ENCODE measurements at regions of chr5 and their contacts with region 1.

Region 1: DNA sequence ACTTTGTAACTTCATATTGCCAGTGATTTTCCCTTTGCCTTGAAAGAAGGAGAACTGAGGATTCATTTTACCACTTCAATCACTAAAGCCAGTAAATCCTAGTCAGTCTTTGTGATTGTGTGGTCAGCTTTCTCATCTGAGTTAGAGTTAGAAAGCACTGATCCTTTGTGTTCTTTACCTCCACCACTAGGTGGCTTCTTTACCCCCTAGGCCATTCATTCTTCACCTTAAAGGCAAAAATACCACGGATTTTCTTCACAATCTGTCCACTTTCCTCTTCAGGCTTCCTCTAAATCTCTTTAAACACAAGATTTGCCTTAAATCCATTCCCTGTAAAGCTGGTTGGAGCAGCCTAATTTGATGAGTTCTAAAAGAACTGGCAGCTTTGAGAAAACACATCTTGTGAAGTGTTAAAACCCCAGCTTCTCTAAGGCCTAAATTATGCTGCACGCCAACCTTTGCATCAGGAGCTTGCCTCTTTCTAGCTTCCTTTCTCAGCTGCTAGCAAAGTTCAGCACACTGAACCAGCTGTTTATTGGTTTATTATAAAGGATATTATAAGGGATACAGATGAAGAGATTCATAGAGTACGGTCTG is 20.4 kb downstream of the BDP1 start:
- DNase-seq: peak in 3 of 5 donors; percentile 9 to 16 (median 16)
- H3K4me3 ChIP-seq: no peak overlapping the region
- H3K4me3 Mint-ChIP-seq: no peak overlapping the region
- H3K27ac ChIP-seq: no peak overlapping the region
- H3K27ac Mint-ChIP-seq: peak overlapping the region in 3 of 7 donors; percentile 12 to 53 (median 17)
- H3K4me1 ChIP-seq: no peaks in the 10 kb centered on the region
- H3K4me1 Mint-ChIP-seq: peaks cover 0 to 6% (median 3%) of the 10 kb centered on the region in 4 donors
- H3K27me3 ChIP-seq: no peaks in the 10 kb centered on the region
- H3K27me3 Mint-ChIP-seq: no peaks in the 10 kb centered on the region

Region 2: GRCh38 chr5:71461360-71461759 is 14.5 kb before region 1 on chr5:
- CTCF ChIA-PET with region 1: interaction called, 11 read pairs
- POLR2A ChIA-PET with region 1: interaction called, 7 read pairs
- intact Hi-C with region 1: no loop called
- DNase-seq: no peak
- H3K4me3 ChIP-seq: no peak overlapping the region
- H3K4me3 Mint-ChIP-seq: no peak overlapping the region
- H3K27ac ChIP-seq: no peak overlapping the region
- H3K27ac Mint-ChIP-seq: no peak overlapping the region
- H3K4me1 ChIP-seq: peaks cover 16% of the 10 kb centered on the region
- H3K4me1 Mint-ChIP-seq: peaks cover 12 to 21% (median 19%) of the 10 kb centered on the region in 4 donors
- H3K27me3 ChIP-seq: no peaks in the 10 kb centered on the region
- H3K27me3 Mint-ChIP-seq: no peaks in the 10 kb centered on the region

Region 3: DNA sequence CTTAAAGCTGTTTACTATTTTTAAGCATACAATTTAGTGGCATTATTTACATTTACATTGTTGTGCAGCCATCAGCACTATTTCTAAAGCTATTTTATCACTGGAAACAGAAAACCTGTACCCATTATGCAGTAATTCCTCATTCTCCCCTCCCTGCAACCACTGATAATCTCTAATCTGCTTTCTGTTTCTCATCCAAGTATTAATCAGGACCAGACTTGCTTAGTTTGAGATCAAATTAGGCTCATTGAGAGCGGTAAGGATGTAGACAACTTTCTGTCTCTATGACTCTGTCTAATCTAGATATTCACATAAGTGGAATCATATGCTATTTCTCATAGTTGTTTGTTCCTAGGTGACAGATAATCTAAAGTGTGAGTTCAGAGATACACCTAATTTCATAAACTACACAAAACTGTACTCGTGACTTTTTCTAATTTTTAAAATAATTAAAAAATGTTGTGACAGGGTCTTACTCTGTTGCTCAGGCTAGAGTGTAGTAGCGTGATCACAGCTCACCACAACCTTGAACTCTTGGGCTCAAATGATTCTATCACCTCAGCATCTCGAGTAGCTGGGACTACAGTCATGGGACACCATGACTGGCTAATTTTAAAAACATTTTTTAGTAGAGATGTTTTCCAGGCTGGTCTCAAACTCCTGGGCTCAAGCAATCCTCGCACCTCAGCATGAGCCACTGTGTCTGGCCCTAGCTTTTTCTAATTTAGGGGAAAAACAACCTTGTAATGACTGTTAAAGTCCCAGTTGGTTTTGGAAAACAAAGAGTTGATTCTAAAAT is 17.1 kb after region 1 on chr5:
- CTCF ChIA-PET with region 1: interaction called, 23 read pairs
- POLR2A ChIA-PET with region 1: no interaction called
- intact Hi-C with region 1: no loop called
- DNase-seq: no peak
- H3K4me3 ChIP-seq: no peak overlapping the region
- H3K4me3 Mint-ChIP-seq: no peak overlapping the region
- H3K27ac ChIP-seq: no peak overlapping the region
- H3K27ac Mint-ChIP-seq: no peak overlapping the region
- H3K4me1 ChIP-seq: no peaks in the 10 kb centered on the region
- H3K4me1 Mint-ChIP-seq: peaks cover 0 to 10% (median 3%) of the 10 kb centered on the region in 4 donors
- H3K27me3 ChIP-seq: no peaks in the 10 kb centered on the region
- H3K27me3 Mint-ChIP-seq: no peaks in the 10 kb centered on the region

Region 4: GRCh38 chr5:71633255-71634155 is 157.6 kb after region 1 on chr5:
- CTCF ChIA-PET with region 1: no interaction called
- POLR2A ChIA-PET with region 1: no interaction called
- intact Hi-C with region 1: no loop called
- DNase-seq: no peak
- H3K4me3 ChIP-seq: no peak overlapping the region
- H3K4me3 Mint-ChIP-seq: no peak overlapping the region
- H3K27ac ChIP-seq: no peak overlapping the region
- H3K27ac Mint-ChIP-seq: peak overlapping the region in 2 of 7 donors; percentile 36 to 48
- H3K4me1 ChIP-seq: no peaks in the 10 kb centered on the region
- H3K4me1 Mint-ChIP-seq: peaks cover 0 to 10% (median 2%) of the 10 kb centered on the region in 4 donors
- H3K27me3 ChIP-seq: no peaks in the 10 kb centered on the region
- H3K27me3 Mint-ChIP-seq: no peaks in the 10 kb centered on the region

Region 5: GRCh38 chr5:71757590-71758543 is 282.0 kb after region 1 on chr5:
- CTCF ChIA-PET with region 1: interaction called, 13 read pairs
- POLR2A ChIA-PET with region 1: no interaction called
- intact Hi-C with region 1: no loop called
- DNase-seq: peak in 4 of 5 donors; percentile 19 to 35 (median 28)
- H3K4me3 ChIP-seq: no peak overlapping the region
- H3K4me3 Mint-ChIP-seq: peak overlapping the region in 6 of 8 donors; percentile 21 to 68 (median 40)
- H3K27ac ChIP-seq: no peak overlapping the region
- H3K27ac Mint-ChIP-seq: peak overlapping the region in 4 of 7 donors; percentile 9 to 37 (median 32)
- H3K4me1 ChIP-seq: no peaks in the 10 kb centered on the region
- H3K4me1 Mint-ChIP-seq: peaks cover 0 to 9% (median 6%) of the 10 kb centered on the region in 4 donors
- H3K27me3 ChIP-seq: no peaks in the 10 kb centered on the region
- H3K27me3 Mint-ChIP-seq: peaks cover 1 to 7% of the 10 kb centered on the region in 2 donors

Region 6: GRCh38 chr5:71802673-71803072 is 326.8 kb after region 1 on chr5:
- CTCF ChIA-PET with region 1: no interaction called
- POLR2A ChIA-PET with region 1: no interaction called
- intact Hi-C with region 1: no loop called
- DNase-seq: no peak
- H3K4me3 ChIP-seq: no peak overlapping the region
- H3K4me3 Mint-ChIP-seq: no peak overlapping the region
- H3K27ac ChIP-seq: no peak overlapping the region
- H3K27ac Mint-ChIP-seq: no peak overlapping the region
- H3K4me1 ChIP-seq: no peaks in the 10 kb centered on the region
- H3K4me1 Mint-ChIP-seq: no peaks in the 10 kb centered on the region
- H3K27me3 ChIP-seq: no peaks in the 10 kb centered on the region
- H3K27me3 Mint-ChIP-seq: peaks cover 13 to 24% of the 10 kb centered on the region in 2 donors

Measured in CD4-positive, alpha-beta memory T cell (primary cell).